ENCODE measurements at regions of chr9 and their contacts with region 1.

Region 1: DNA sequence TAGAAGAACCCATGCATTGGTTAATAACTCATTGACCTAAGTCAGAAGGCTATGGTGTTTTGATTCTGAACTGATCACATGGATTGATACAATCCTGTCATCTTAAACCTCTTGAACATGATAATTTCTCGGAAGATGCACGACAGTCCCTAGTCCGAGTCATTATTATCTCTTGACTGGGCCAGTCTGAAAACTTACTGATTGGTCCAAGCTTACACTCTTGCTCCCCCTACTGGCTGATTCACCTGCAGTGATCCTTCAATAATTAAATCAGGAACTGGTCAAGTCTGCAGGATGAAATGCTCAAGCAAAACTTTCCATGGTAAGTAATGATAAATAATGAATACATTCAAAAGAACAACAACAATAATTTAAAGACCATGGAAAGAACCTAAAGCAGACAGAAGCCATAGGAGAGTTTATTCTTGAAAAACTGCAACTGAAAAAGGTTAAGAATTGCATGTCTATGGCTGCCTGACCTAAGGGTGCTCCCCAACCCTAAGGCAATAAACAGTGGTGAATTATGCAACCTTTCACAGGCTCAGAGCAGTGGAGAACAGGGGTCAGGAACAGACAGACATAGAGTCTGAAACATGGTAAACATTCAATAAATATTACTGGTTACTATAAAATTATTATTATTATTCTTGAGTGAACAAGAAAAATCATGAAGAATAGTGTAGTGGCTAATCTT is 79.3 kb downstream of the BRINP1 start:
- DNase-seq: peak; percentile 50
- H3K4me3 ChIP-seq: no peak overlapping the region
- H3K27ac ChIP-seq: no peak overlapping the region
- H3K4me1 ChIP-seq: no peaks in the 10 kb centered on the region
- H3K27me3 ChIP-seq: no peaks in the 10 kb centered on the region
- CTCF ChIP-seq: peak; percentile 49 to 66

Region 2: DNA sequence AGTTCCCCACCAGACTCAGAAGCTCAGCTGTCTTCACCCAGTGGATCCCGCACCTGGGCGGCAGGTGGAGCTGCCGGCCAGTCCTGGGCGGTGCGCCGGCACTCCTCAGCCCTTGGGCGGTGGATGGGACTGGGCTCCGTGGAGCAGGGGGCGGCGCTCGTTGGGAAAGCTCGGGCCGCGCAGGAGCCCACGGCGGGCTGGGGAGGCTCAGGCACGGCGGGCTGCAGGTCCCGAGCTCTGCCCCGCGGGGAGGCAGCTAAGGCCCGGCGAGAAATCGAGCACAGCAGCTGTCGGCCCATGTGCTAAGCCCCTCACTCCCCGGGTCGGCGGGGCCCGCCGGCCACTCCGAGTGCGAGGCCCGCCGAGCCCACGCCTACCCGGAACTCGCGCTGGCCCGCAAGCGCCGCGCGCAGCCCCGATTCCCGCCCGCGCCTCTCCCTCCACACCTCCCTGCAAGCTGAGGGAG is 480.7 kb before region 1 on chr9:
- CTCF ChIA-PET with region 1: no interaction called
- dilution Hi-C with region 1: no loop called
- in situ Hi-C with region 1: no loop called
- intact Hi-C with region 1: loop called (anchors 1 kb)
- DNase-seq: no peak
- H3K4me3 ChIP-seq: no peak overlapping the region
- H3K27ac ChIP-seq: no peak overlapping the region
- H3K4me1 ChIP-seq: no peaks in the 10 kb centered on the region
- H3K27me3 ChIP-seq: no peaks in the 10 kb centered on the region
- CTCF ChIP-seq: no peak

Region 3: GRCh38 chr9:118829334-118829733 is 460.6 kb before region 1 on chr9:
- CTCF ChIA-PET with region 1: no interaction called
- dilution Hi-C with region 1: no loop called
- in situ Hi-C with region 1: no loop called
- intact Hi-C with region 1: loop called (anchors 2 kb)
- DNase-seq: peak; percentile 22
- H3K4me3 ChIP-seq: no peak overlapping the region
- H3K27ac ChIP-seq: no peak overlapping the region
- H3K4me1 ChIP-seq: no peaks in the 10 kb centered on the region
- H3K27me3 ChIP-seq: no peaks in the 10 kb centered on the region
- CTCF ChIP-seq: no peak

Region 4: DNA sequence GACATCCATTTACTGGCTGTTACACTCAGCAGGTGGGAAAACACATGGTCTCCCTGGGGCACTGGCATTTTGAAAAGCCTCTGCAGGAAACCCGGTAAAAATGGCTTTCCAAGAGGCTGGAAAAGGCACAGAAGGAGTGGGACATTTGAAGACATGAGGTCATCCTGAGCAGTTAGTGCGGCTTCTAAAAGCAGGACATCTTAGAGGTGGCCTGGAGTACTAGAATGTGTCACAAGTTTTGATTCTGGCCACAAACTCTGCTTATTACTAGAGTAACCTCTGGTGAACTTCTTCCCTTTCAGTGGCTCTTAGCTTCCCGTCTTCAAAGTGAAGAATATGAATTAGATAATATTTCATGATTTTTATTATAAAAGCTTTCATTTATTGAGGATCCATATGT is 502.4 kb after region 1 on chr9:
- CTCF ChIA-PET with region 1: no interaction called
- dilution Hi-C with region 1: no loop called
- in situ Hi-C with region 1: no loop called
- intact Hi-C with region 1: no loop called
- DNase-seq: no peak
- H3K4me3 ChIP-seq: no peak overlapping the region
- H3K27ac ChIP-seq: no peak overlapping the region
- H3K4me1 ChIP-seq: peaks cover 19% of the 10 kb centered on the region
- H3K27me3 ChIP-seq: no peaks in the 10 kb centered on the region
- CTCF ChIP-seq: no peak

Measured in mammary epithelial cell (primary cell).